CD8-positive, alpha-beta memory T cell (primary cell): ENCODE measurements at regions of chr10 and their contacts with region 1.

Region 1: GRCh38 chr10:112735041-112735695 is 214.9 kb upstream of the TCF7L2 start:
- DNase-seq: no peak
- H3K4me3 ChIP-seq: no peak overlapping the region
- H3K4me3 Mint-ChIP-seq: no peak overlapping the region
- H3K27ac ChIP-seq: no peak overlapping the region
- H3K27ac Mint-ChIP-seq: no peak overlapping the region
- H3K4me1 ChIP-seq: no peaks in the 10 kb centered on the region
- H3K4me1 Mint-ChIP-seq: no peaks in the 10 kb centered on the region
- H3K27me3 ChIP-seq: no peaks in the 10 kb centered on the region
- H3K27me3 Mint-ChIP-seq: no peaks in the 10 kb centered on the region

Region 2: GRCh38 chr10:112585960-112586359 is 149.2 kb before region 1 on chr10:
- CTCF ChIA-PET with region 1: no interaction called
- POLR2A ChIA-PET with region 1: interaction called, 13 read pairs
- DNase-seq: no peak
- H3K4me3 ChIP-seq: no peak overlapping the region
- H3K4me3 Mint-ChIP-seq: no peak overlapping the region
- H3K27ac ChIP-seq: no peak overlapping the region
- H3K27ac Mint-ChIP-seq: no peak overlapping the region
- H3K4me1 ChIP-seq: no peaks in the 10 kb centered on the region
- H3K4me1 Mint-ChIP-seq: no peaks in the 10 kb centered on the region
- H3K27me3 ChIP-seq: no peaks in the 10 kb centered on the region
- H3K27me3 Mint-ChIP-seq: no peaks in the 10 kb centered on the region

Region 3: GRCh38 chr10:112605063-112605462 is 130.1 kb before region 1 on chr10:
- CTCF ChIA-PET with region 1: no interaction called
- POLR2A ChIA-PET with region 1: no interaction called
- DNase-seq: no peak
- H3K4me3 ChIP-seq: no peak overlapping the region
- H3K4me3 Mint-ChIP-seq: no peak overlapping the region
- H3K27ac ChIP-seq: no peak overlapping the region
- H3K27ac Mint-ChIP-seq: no peak overlapping the region
- H3K4me1 ChIP-seq: no peaks in the 10 kb centered on the region
- H3K4me1 Mint-ChIP-seq: peaks cover under 1 to 4% (median 4%) of the 10 kb centered on the region in 3 donors
- H3K27me3 ChIP-seq: no peaks in the 10 kb centered on the region
- H3K27me3 Mint-ChIP-seq: peaks cover 0 to 2% of the 10 kb centered on the region in 2 donors